ENCODE measurements at regions of chr14 and their contacts with region 1.

Region 1: DNA sequence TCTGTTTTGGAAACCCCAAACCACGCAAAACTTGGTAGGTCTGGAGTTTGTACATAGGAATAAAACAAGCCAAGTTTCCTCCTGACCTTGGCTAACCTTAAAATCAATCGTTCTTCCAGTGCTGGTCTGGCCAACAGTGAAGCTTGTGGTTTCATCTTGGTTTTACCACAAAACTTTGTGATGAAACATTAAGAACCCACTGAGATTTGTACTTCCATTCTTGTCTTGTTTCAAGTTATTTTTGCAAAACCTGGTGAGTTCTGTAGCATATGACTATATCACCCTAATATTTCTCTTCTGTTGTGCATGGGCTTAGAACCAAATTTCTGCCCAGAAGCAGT is 26.4 kb downstream of the SIX1 start:
- DNase-seq: no peak
- H3K4me3 ChIP-seq: no peak overlapping the region
- H3K27ac ChIP-seq: no peak overlapping the region
- H3K4me1 ChIP-seq: no peaks in the 10 kb centered on the region
- H3K27me3 ChIP-seq: no peaks in the 10 kb centered on the region
- CTCF ChIP-seq: no peak
- POLR2A ChIP-seq: no peak

Region 2: GRCh38 chr14:61025251-61026223 is 402.6 kb after region 1 on chr14:
- intact Hi-C with region 1: loop called (anchors 10 kb)
- DNase-seq: peak; percentile 43 to 50
- H3K4me3 ChIP-seq: no peak overlapping the region
- H3K27ac ChIP-seq: no peak overlapping the region
- H3K4me1 ChIP-seq: no peaks in the 10 kb centered on the region
- H3K27me3 ChIP-seq: no peaks in the 10 kb centered on the region
- CTCF ChIP-seq: peak; percentile 67 to 85 (median 78)
- POLR2A ChIP-seq: no peak